Heart left ventricle (tissue), 16 donors: ENCODE measurements at regions of chr2 and their contacts with region 1.

Region 1: GRCh38 chr2:202529389-202529788 is 105.4 kb upstream of the FAM117B start:
- DNase-seq: no peak
- ATAC-seq: no peak
- H3K4me3 ChIP-seq: no peak overlapping the region
- H3K27ac ChIP-seq: no peak overlapping the region
- H3K4me1 ChIP-seq: peaks cover 0 to 12% (median 0%) of the 10 kb centered on the region in 12 donors
- H3K27me3 ChIP-seq: no peaks in the 10 kb centered on the region
- CTCF ChIP-seq: no peak
- POLR2A ChIP-seq: no peak

Region 2: DNA sequence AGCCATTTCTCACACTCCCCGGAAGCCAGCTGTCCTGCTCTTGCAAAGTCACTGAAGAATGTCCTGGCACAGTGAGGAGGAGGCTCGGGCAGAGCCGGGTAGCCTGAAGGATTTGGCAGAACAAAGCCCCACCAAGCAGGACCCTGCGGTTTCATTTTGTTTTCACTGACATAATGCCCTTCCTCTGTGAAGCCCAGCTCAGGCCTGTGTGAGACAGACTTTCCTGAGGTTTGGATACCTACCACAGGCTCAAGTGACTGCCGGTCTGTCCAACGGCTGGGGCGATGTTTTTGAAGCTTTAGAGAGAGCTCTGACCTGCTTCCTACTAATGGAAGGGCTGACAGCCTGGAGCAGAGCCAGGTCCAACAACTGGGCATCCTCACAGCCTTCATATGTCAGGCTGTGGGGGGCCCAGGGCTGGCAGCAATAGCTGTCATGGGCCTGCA is 595.6 kb before region 1 on chr2:
- intact Hi-C with region 1: no loop called
- DNase-seq: peak in 1 of 5 donors; percentile 34
- ATAC-seq: peak in 2 of 4 donors; percentile 28 to 38
- H3K4me3 ChIP-seq: no peak overlapping the region
- H3K27ac ChIP-seq: no peak overlapping the region
- H3K4me1 ChIP-seq: no peaks in the 10 kb centered on the region
- H3K27me3 ChIP-seq: peaks cover 0 to 24% (median 0%) of the 10 kb centered on the region in 9 donors
- CTCF ChIP-seq: no peak
- POLR2A ChIP-seq: no peak

Region 3: DNA sequence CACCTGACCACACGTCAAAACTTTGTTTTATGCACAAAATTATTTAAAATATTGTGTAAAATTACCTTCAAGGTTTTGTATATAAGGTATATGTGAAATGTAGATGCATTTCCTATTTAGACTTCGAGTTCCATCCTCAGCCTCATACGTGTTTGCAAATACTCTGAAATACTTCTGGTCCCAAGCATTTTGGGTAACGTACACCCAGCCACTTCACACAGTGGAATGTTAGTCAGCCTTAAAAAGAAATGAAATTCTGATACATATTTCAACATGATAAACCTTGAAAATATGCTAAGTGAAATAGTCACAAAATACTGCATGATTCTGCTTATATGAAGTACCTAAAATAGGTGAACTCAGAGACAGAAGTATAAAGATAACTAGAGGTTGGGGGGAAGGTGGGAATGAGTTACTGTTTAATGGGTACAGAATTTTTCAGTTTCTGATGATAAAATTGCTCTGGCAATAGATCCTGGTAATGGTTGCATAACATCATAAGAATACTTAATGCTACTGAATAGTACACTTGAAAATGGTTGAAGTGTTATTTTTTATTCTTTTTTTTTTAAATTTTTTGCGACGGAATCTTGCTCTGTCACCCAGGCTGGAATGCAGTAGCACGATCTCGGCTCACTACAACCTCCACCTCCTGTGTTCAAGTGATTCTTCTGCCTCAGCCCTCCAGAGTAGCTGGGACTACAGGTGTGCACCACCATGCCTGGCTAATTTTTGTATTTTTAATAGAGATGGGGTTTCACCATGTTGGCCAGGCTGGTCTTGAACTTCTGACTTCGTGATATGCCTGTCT is 239.8 kb before region 1 on chr2:
- intact Hi-C with region 1: loop called in 2 of 10 experiments (anchors 10 kb)
- DNase-seq: no peak
- ATAC-seq: no peak
- H3K4me3 ChIP-seq: no peak overlapping the region
- H3K27ac ChIP-seq: no peak overlapping the region
- H3K4me1 ChIP-seq: no peaks in the 10 kb centered on the region
- H3K27me3 ChIP-seq: no peaks in the 10 kb centered on the region
- CTCF ChIP-seq: no peak
- POLR2A ChIP-seq: no peak

Region 4: DNA sequence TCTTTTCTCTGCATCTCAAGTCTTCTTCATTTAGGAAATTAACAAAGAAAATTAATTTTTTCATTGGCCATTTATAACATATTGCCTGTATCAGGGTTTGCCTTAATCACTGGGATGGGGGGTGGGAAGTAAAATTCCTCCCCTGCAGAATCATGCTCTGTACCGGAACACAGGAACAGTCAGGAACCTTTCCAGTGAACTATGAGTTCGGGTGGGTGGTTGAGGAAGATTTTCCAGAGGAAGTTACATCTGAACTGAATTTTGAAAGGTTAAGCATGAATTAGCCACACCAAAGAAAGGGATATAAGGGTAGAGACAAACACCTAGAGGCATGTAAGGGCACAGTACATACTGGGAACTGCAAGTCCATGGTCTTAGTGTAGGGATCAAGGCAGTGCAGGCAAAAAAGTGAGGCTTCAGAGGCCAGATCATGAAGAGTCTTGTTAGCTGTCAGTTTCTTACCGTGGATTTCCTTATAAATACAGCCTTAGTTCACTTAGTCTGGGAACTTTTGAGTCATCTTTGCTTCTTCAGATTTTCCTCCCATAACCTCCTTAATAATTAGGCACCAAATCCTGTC is 161.0 kb after region 1 on chr2:
- intact Hi-C with region 1: no loop called
- DNase-seq: no peak
- ATAC-seq: peak in 1 of 4 donors; percentile 42
- H3K4me3 ChIP-seq: no peak overlapping the region
- H3K27ac ChIP-seq: no peak overlapping the region
- H3K4me1 ChIP-seq: peaks cover 0 to 7% (median 0%) of the 10 kb centered on the region in 12 donors
- H3K27me3 ChIP-seq: no peaks in the 10 kb centered on the region
- CTCF ChIP-seq: no peak
- POLR2A ChIP-seq: no peak